Right ventricle myocardium superior (tissue), 1 donor: ENCODE measurements at regions of chr3 and their contacts with region 1.

Region 1: DNA sequence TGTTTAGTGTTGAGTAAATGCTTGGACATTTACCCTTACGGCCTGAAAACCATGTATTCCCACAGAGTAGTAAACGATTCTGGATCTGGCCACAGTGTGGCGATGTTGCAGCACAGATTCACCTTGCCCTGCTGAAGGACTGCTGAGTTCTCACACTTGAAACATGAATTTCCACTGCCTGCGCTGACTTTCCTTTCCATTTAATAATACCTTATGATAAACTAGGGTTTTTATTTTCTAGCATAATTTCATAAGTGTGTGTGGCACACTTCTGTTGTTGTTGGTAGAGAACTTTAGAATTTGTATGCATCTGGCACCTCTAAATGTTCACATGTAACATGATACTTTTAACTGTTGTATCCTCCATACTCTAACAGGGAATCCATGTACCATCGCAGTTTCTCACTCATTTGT is 53.9 kb downstream of the C3orf38 start:
- DNase-seq: peak; percentile 63
- ATAC-seq: peak; percentile 95

Region 2: GRCh38 chr3:89113903-89114840 is 910.5 kb after region 1 on chr3:
- intact Hi-C with region 1: loop called (anchors 5 kb)
- DNase-seq: peak; percentile 74
- ATAC-seq: peak; percentile 98

Region 3: DNA sequence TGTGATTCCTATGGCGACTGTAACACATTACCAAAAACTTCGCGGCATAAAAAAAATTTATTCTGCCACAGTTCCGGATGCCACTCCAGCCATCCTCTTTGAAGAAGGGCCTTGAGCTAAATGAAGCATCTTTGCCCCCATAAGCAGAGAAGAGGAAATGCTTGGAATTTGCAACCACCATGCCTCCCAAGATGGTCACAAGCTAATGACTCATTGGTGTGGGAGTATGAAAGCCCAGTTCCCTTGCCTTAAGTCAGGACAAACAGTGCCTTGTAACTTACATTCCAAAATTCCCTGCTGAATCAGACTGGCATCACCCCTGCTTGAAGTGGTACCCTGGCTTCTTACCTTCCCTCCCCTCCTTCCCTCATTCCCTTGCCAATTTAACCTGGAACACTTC is 1981.2 kb after region 1 on chr3:
- intact Hi-C with region 1: loop called (anchors 5 kb)
- DNase-seq: no peak
- ATAC-seq: no peak